A549 (cell line): ENCODE measurements at regions of chr13 and their contacts with region 1.

Region 1: GRCh38 chr13:94660695-94661326 is 51.5 kb downstream of the SOX21 start:
- DNase-seq: peak; percentile 11 to 45
- ATAC-seq: peak; percentile 58 to 63; a peak in 3 of 6 replicates
- H3K4me3 ChIP-seq: no peak overlapping the region
- H3K27ac ChIP-seq: no peak overlapping the region
- H3K4me1 ChIP-seq: peaks cover 12% of the 10 kb centered on the region; the same call in 2 of the 3 replicates
- CTCF ChIP-seq: peak; percentile 39; the same call in 2 of the 3 replicates
- EP300 ChIP-seq: no peak
- POLR2A ChIP-seq: no peak
- RAD21 ChIP-seq: peak; percentile 49 to 54

Region 2: DNA sequence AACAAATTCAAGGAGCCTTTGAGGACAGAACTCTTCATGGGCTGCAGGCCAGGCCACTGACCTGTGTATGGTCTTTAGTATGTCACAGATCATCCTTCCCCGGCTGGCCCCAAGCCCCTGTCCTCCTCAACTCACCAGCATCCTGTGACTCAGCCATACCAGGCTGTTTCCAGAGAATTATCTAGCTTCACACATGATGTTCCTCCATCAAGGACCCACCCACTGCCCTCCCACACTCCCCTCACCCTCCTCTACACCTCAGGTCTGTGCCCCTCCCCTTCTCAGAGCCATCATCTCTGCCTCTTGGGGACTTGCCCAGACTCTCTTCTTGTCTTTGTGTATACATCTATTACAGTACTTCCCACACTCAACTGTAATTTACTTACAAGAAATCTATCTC is 196.0 kb before region 1 on chr13:
- CTCF ChIA-PET with region 1: no interaction called
- POLR2A ChIA-PET with region 1: no interaction called
- DNase-seq: no peak
- ATAC-seq: no peak
- H3K4me3 ChIP-seq: no peak overlapping the region
- H3K27ac ChIP-seq: no peak overlapping the region
- H3K4me1 ChIP-seq: no peaks in the 10 kb centered on the region
- CTCF ChIP-seq: no peak
- EP300 ChIP-seq: no peak
- POLR2A ChIP-seq: no peak
- RAD21 ChIP-seq: no peak

Region 3: GRCh38 chr13:94674609-94675348 is 14.0 kb after region 1 on chr13:
- CTCF ChIA-PET with region 1: interaction called, 17 read pairs
- POLR2A ChIA-PET with region 1: no interaction called
- DNase-seq: peak; percentile 37 to 66
- ATAC-seq: peak; percentile 68 to 82; a peak in 3 of 6 replicates
- H3K4me3 ChIP-seq: no peak overlapping the region
- H3K27ac ChIP-seq: no peak overlapping the region
- H3K4me1 ChIP-seq: no peaks in the 10 kb centered on the region
- CTCF ChIP-seq: peak; percentile 74
- EP300 ChIP-seq: no peak
- POLR2A ChIP-seq: no peak
- RAD21 ChIP-seq: peak; percentile 67

Region 4: GRCh38 chr13:94784066-94784465 is 123.3 kb after region 1 on chr13:
- CTCF ChIA-PET with region 1: no interaction called
- POLR2A ChIA-PET with region 1: no interaction called
- DNase-seq: no peak
- ATAC-seq: no peak
- H3K4me3 ChIP-seq: no peak overlapping the region
- H3K27ac ChIP-seq: no peak overlapping the region
- H3K4me1 ChIP-seq: no peaks in the 10 kb centered on the region
- CTCF ChIP-seq: no peak
- EP300 ChIP-seq: no peak
- POLR2A ChIP-seq: no peak
- RAD21 ChIP-seq: no peak